IMR-90 (cell line): ENCODE measurements at regions of chr12 and their contacts with region 1.

Region 1: GRCh38 chr12:60142238-60142637 is 546.4 kb downstream of the SLC16A7 start:
- DNase-seq: no peak
- ATAC-seq: no peak
- H3K4me3 ChIP-seq: no peak overlapping the region
- H3K27ac ChIP-seq: no peak overlapping the region
- H3K4me1 ChIP-seq: no peaks in the 10 kb centered on the region
- H3K27me3 ChIP-seq: no peaks in the 10 kb centered on the region
- CTCF ChIP-seq: no peak
- POLR2A ChIP-seq: no peak
- RAD21 ChIP-seq: no peak

Region 2: DNA sequence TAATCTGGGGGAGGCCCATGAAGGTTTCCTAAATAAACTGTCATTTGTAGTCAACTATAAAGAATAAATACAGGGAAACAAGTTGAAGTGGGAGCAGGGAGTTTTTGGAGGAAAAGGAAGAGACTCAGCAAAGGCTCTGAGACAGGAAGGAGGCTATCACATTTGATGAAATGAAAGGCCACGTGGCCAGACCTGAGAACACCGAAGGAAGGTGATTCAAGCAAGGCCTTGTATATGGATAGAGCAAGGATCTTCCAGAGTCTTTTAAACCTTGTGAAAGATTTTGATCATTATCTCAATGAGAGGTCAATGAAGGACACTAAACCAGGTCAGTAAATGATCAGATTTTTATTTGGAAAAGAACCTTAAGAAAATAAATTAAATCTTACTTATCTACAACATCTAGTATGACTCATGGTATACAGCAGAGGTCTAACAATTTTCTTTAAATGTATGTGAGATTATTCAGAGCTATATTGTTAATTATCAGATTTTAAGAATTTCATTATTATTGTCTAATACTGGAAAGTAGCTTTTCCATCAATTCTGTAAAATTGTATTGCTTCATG is 22.9 kb before region 1 on chr12:
- CTCF ChIA-PET with region 1: interaction called, 10 read pairs
- POLR2A ChIA-PET with region 1: no interaction called
- dilution Hi-C with region 1: no loop called
- in situ Hi-C with region 1: no loop called
- intact Hi-C with region 1: no loop called
- DNase-seq: no peak
- ATAC-seq: no peak
- H3K4me3 ChIP-seq: no peak overlapping the region
- H3K27ac ChIP-seq: no peak overlapping the region
- H3K4me1 ChIP-seq: peaks cover 2% of the 10 kb centered on the region; the same call in 1 of the 2 replicates
- H3K27me3 ChIP-seq: no peaks in the 10 kb centered on the region
- CTCF ChIP-seq: no peak
- POLR2A ChIP-seq: no peak
- RAD21 ChIP-seq: no peak